ENCODE measurements at regions of chr2 and their contacts with region 1.

Region 1: GRCh38 chr2:120686511-120687168 is 49.0 kb upstream of the GLI2 start:
- DNase-seq: no peak
- H3K4me3 ChIP-seq: no peak overlapping the region
- H3K27ac ChIP-seq: no peak overlapping the region
- H3K4me1 ChIP-seq: no peaks in the 10 kb centered on the region
- H3K27me3 ChIP-seq: no peaks in the 10 kb centered on the region
- CTCF ChIP-seq: peak; percentile 60

Region 2: DNA sequence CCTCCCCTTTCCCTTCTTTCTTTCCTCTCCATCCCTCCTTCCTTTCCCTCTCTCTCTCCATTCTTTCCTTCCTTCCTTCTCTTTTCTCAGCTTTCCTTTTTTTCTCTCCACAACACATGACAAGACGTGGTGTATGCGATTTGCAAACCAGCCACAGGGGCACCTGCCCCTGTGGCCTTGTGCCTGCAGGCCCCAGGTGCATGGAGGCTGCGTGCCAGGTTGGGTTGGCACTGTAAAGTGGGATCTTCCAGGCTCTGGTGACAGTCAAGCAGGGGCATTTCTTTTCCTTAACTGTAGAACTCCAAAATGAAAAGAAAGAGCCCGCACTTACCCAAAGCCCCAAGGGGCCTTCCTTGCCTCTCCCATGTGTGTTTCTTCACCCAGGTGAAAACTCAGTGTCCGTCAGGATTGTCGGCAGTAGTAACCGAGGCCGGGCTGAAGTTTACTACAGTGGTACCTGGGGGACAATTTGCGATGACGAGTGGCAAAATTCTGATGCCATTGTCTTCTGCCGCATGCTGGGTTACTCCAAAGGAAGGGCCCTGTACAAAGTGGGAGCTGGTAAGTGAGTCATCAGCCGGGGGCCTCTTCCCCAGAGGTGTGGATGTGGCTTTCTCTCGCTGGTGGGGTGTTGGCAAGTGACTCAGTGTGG is 1693.8 kb before region 1 on chr2:
- CTCF ChIA-PET with region 1: no interaction called
- POLR2A ChIA-PET with region 1: interaction called, 25 read pairs
- intact Hi-C with region 1: no loop called
- DNase-seq: no peak
- H3K4me3 ChIP-seq: no peak overlapping the region
- H3K27ac ChIP-seq: no peak overlapping the region
- H3K4me1 ChIP-seq: no peaks in the 10 kb centered on the region
- H3K27me3 ChIP-seq: no peaks in the 10 kb centered on the region
- CTCF ChIP-seq: no peak

Region 3: DNA sequence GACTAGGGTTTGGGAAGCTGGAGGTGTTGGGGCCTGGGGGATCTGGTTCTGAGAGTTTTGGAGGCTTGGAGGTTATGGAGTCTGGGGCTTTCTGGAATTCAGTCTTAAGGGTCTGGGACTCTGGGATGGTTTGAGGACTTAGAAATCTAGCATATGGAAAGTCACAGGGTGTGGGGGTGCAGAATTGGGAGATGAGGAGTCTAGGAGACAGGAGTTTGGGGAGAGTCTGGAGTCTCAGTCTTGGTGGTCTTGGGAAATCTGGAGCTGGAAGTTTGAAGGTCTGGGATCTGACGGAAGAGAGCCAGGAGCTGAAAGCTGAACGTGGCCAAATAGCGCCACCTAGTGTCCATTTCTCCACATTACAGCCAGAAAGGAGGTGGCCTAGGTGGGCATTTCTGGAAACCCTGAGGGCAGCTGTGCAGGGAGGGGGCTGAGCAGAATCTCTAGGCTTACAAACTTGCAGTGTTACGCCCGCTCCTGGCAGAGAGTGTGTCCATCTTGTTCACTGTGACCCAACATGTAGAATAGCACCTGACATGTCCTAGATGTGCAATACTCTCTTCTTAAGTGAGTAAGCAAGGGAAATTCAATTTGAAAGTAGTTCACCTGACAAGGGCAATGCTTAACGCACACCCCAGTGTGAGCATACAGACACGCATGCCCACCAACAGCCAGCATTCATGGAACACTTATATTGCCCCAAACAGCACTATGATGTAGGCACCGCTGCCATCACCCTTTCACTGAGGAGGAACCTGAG is 393.6 kb after region 1 on chr2:
- CTCF ChIA-PET with region 1: interaction called, 11 read pairs
- POLR2A ChIA-PET with region 1: no interaction called
- intact Hi-C with region 1: no loop called
- DNase-seq: peak; percentile 72
- H3K4me3 ChIP-seq: no peak overlapping the region
- H3K27ac ChIP-seq: no peak overlapping the region
- H3K4me1 ChIP-seq: no peaks in the 10 kb centered on the region
- H3K27me3 ChIP-seq: no peaks in the 10 kb centered on the region
- CTCF ChIP-seq: peak; percentile 86

Measured in A673 (cell line).